ENCODE measurements at regions of chr3 and their contacts with region 1.

Region 1: GRCh38 chr3:100463002-100463401 is 29.4 kb upstream of the TMEM45A start:
- DNase-seq: peak; percentile 84
- H3K4me3 ChIP-seq: no peak overlapping the region
- H3K27ac ChIP-seq: no peak overlapping the region
- H3K4me1 ChIP-seq: no peaks in the 10 kb centered on the region
- H3K27me3 ChIP-seq: no peaks in the 10 kb centered on the region

Region 2: DNA sequence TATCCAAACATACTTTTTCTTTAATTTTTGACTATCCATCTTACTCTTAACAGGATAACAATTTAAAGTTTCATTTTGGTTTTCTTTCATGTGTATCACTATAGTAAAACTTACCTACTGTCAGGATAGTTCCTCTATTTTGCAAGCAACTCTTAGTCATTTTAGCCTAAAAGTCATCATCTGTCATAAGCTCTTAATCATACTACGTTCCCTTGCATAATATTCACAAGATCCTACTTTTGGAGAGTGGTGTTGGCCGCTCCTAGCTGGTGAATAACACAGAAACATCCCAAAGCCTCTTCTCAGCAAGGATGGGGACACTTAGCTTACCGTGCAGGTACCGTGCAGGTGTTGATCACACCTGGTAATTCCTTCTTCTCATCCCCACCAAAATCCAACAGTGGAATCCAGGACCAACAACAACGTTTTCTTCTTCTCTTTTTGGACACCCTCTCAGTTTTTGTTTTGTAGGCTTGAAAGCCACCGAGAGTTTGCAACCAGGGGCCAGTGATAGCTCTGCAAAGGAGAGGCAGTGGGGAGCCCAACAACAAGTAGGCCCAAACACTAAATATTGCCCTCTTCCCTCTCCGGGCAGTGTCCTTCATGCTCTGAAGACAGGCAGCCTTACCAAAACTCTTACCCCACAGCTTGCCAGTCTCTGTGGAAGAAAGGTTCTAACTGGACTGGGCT is 349.1 kb before region 1 on chr3:
- in situ Hi-C with region 1: no loop called
- DNase-seq: peak; percentile 52
- H3K4me3 ChIP-seq: no peak overlapping the region
- H3K27ac ChIP-seq: no peak overlapping the region
- H3K4me1 ChIP-seq: no peaks in the 10 kb centered on the region
- H3K27me3 ChIP-seq: no peaks in the 10 kb centered on the region

Region 3: GRCh38 chr3:100590114-100590839 is 127.3 kb after region 1 on chr3:
- in situ Hi-C with region 1: loop called (anchors 5 kb)
- DNase-seq: peak; percentile 77
- H3K4me3 ChIP-seq: peak overlapping the region; percentile 55
- H3K27ac ChIP-seq: no peak overlapping the region
- H3K4me1 ChIP-seq: no peaks in the 10 kb centered on the region
- H3K27me3 ChIP-seq: no peaks in the 10 kb centered on the region

Measured in GM23248 (cell line).